ENCODE measurements at regions of chr12 and their contacts with region 1.

Region 1: DNA sequence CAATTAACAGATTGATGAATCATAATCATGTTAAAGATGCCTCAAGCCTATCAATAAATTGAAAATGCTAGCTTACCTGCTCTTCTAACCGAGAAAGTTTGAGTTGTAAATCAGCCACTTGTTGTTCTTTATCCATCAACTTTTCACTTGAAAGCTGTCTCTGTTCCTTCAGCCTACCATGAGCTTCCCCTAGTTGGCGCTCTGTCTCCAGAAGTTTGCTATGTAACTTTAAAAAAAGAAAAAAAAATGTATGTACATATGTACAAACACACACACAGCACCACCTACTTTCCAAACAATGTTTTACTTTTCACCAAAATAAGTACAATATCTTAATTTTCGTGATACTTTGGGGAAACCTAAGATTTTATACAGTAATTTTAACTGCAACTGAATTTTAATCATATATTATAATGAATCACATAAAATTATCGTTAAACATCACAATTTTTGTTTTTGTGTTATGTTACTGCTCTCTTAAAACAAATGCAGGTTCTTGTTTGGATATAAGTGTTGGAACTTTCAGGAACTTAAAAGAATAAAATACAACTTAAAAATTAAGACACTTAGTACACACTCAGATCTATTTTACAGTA is 101.2 kb downstream of the EEA1 start:
- DNase-seq: peak; percentile 33
- ATAC-seq: peak; percentile 66; the same call in 1 of the 2 replicates
- H3K4me3 ChIP-seq: no peak overlapping the region
- H3K27ac ChIP-seq: no peak overlapping the region
- H3K4me1 ChIP-seq: no peaks in the 10 kb centered on the region
- H3K27me3 ChIP-seq: no peaks in the 10 kb centered on the region
- CTCF ChIP-seq: peak; percentile 87; the same call in 1 of the 2 replicates

Region 2: GRCh38 chr12:93322784-93323183 is 494.9 kb after region 1 on chr12:
- CTCF ChIA-PET with region 1: interaction called, 12 read pairs
- POLR2A ChIA-PET with region 1: no interaction called
- in situ Hi-C with region 1: no loop called
- intact Hi-C with region 1: no loop called
- DNase-seq: no peak
- ATAC-seq: no peak
- H3K4me3 ChIP-seq: no peak overlapping the region
- H3K27ac ChIP-seq: no peak overlapping the region
- H3K4me1 ChIP-seq: no peaks in the 10 kb centered on the region
- H3K27me3 ChIP-seq: no peaks in the 10 kb centered on the region
- CTCF ChIP-seq: no peak